ENCODE measurements at regions of chr7 and their contacts with region 1.

Region 1: GRCh38 chr7:127253281-127254162 is 781 bp upstream of the GRM8 start:
- DNase-seq: peak; percentile 78
- ATAC-seq: peak; percentile 83
- H3K4me3 Mint-ChIP-seq: peak overlapping the region; percentile 75
- H3K27ac Mint-ChIP-seq: no peak overlapping the region
- H3K4me1 Mint-ChIP-seq: peaks cover 9% of the 10 kb centered on the region
- H3K27me3 Mint-ChIP-seq: peaks cover 63% of the 10 kb centered on the region

Region 2: GRCh38 chr7:126803060-126803665 is 450.4 kb before region 1 on chr7:
- CTCF ChIA-PET with region 1: interaction called, 6 read pairs
- POLR2A ChIA-PET with region 1: no interaction called
- intact Hi-C with region 1: loop called (anchors 1 to 5 kb)
- DNase-seq: peak; percentile 54
- ATAC-seq: peak; percentile 66
- H3K4me3 Mint-ChIP-seq: no peak overlapping the region
- H3K27ac Mint-ChIP-seq: no peak overlapping the region
- H3K4me1 Mint-ChIP-seq: no peaks in the 10 kb centered on the region
- H3K27me3 Mint-ChIP-seq: peaks cover 7% of the 10 kb centered on the region

Region 3: DNA sequence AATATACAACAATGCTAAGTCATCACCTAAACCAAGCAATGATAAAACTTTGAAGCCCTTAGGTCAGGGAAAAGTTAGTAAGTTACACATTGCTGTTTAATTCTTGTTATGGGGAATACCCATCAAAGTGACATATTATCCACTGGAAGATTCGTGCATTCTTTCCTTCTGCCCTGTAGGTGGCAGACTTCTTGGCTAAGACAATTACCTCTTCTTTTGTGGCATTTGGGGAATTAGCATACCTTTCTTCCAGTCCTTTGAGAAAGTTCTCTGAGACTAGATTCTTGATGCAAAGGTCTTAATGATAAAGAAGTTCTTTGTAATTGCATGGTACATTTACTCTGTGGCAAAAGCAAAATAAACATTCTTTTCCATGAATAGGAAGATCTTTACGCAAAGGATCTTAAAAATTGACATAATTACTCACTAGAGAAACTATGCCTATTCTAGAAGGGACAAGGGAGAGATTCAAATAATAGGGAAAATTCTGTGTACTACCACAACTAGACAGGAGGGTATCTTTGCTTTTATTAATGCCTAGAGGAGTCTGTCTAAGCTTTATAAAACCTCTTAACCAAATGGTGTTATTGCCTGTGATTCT is 396.7 kb before region 1 on chr7:
- CTCF ChIA-PET with region 1: no interaction called
- POLR2A ChIA-PET with region 1: no interaction called
- intact Hi-C with region 1: loop called in 1 of 2 experiments (anchors 2 kb)
- DNase-seq: no peak
- ATAC-seq: no peak
- H3K4me3 Mint-ChIP-seq: no peak overlapping the region
- H3K27ac Mint-ChIP-seq: no peak overlapping the region
- H3K4me1 Mint-ChIP-seq: no peaks in the 10 kb centered on the region
- H3K27me3 Mint-ChIP-seq: peaks cover 16% of the 10 kb centered on the region

Region 4: DNA sequence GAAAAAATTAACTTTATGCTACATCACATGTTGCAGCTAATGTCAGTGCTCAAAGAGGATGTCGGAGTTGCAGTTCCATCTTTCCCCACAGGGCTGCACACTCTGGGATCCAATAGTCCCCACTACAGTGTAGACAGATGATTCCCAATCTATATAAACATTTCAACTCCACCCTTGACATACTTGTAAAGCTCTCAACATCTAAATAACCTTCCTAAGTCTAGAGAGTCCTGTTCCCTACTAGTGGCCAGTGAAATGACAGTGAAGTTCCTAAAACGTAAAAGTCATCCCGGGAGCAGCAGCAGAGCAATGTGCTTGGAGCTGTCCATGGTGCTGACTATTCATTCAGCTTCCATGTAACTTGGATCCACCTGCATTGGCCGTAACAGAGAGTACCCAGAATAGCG is 145.9 kb before region 1 on chr7:
- CTCF ChIA-PET with region 1: no interaction called
- POLR2A ChIA-PET with region 1: no interaction called
- intact Hi-C with region 1: loop called (anchors 1 to 10 kb)
- DNase-seq: peak; percentile 57
- ATAC-seq: no peak
- H3K4me3 Mint-ChIP-seq: no peak overlapping the region
- H3K27ac Mint-ChIP-seq: no peak overlapping the region
- H3K4me1 Mint-ChIP-seq: no peaks in the 10 kb centered on the region
- H3K27me3 Mint-ChIP-seq: peaks cover 11% of the 10 kb centered on the region

Region 5: GRCh38 chr7:127347567-127348246 is 94.2 kb after region 1 on chr7:
- CTCF ChIA-PET with region 1: interaction called, 10 read pairs
- POLR2A ChIA-PET with region 1: no interaction called
- intact Hi-C with region 1: loop called in 1 of 2 experiments (anchors 2 kb)
- DNase-seq: peak; percentile 87
- ATAC-seq: peak; percentile 98
- H3K4me3 Mint-ChIP-seq: peak overlapping the region; percentile 37
- H3K27ac Mint-ChIP-seq: no peak overlapping the region
- H3K4me1 Mint-ChIP-seq: peaks cover 21% of the 10 kb centered on the region
- H3K27me3 Mint-ChIP-seq: peaks cover 5% of the 10 kb centered on the region

Region 6: GRCh38 chr7:127514499-127514898 is 261.0 kb after region 1 on chr7:
- CTCF ChIA-PET with region 1: no interaction called
- POLR2A ChIA-PET with region 1: no interaction called
- intact Hi-C with region 1: loop called in 1 of 2 experiments (anchors 1 kb)
- DNase-seq: no peak
- ATAC-seq: peak; percentile 49
- H3K4me3 Mint-ChIP-seq: no peak overlapping the region
- H3K27ac Mint-ChIP-seq: no peak overlapping the region
- H3K4me1 Mint-ChIP-seq: no peaks in the 10 kb centered on the region
- H3K27me3 Mint-ChIP-seq: peaks cover 11% of the 10 kb centered on the region